Activated T-helper 1 cell treated with anti-CD3 and anti-CD28 coated beads, Interleukin-12 subunit alpha, Interleukin-12 subunit beta, Interleukin-2, Interleukin-4 antibody, amounts not matched to agents 30 ng/mL and 10 ng/mL and 1 ng/mL, durations not matched to agents 14 hours and 24 hours and 36 hours (primary cell): ENCODE measurements at regions of chr11 and their contacts with region 1.

Region 1: DNA sequence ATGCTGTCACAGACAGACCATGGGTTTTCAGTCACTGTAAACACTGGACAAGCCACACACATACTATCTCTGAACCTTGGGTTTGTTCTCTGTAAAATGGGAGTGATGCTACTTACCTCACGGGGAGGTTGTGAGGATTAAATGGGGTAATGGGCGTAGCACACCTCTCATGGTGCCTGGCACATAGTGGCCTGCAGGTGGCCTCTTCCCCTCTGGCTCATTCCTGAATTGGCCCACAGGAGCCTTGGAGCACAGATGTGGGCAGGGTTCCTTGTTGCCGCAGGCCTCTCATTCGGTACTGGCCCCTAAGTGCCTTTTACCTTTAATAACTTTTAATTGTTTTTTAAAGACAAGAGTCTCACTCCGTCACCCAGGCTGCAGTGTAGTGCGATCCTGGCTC is 11.7 kb downstream of the MICAL2 start:
- DNase-seq: no peak
- H3K4me3 Mint-ChIP-seq: no peak overlapping the region
- H3K27ac Mint-ChIP-seq: no peak overlapping the region
- H3K4me1 Mint-ChIP-seq: peaks cover 89% of the 10 kb centered on the region
- H3K27me3 Mint-ChIP-seq: no peaks in the 10 kb centered on the region

Region 2: GRCh38 chr11:12144330-12145180 is 22.5 kb after region 1 on chr11:
- intact Hi-C with region 1: loop called (anchors 2 kb)
- DNase-seq: no peak
- H3K4me3 Mint-ChIP-seq: peak overlapping the region; percentile 50
- H3K27ac Mint-ChIP-seq: peak overlapping the region; percentile 92
- H3K4me1 Mint-ChIP-seq: peaks cover 94% of the 10 kb centered on the region
- H3K27me3 Mint-ChIP-seq: no peaks in the 10 kb centered on the region